ENCODE measurements at regions of chr7 and their contacts with region 1.

Region 1: DNA sequence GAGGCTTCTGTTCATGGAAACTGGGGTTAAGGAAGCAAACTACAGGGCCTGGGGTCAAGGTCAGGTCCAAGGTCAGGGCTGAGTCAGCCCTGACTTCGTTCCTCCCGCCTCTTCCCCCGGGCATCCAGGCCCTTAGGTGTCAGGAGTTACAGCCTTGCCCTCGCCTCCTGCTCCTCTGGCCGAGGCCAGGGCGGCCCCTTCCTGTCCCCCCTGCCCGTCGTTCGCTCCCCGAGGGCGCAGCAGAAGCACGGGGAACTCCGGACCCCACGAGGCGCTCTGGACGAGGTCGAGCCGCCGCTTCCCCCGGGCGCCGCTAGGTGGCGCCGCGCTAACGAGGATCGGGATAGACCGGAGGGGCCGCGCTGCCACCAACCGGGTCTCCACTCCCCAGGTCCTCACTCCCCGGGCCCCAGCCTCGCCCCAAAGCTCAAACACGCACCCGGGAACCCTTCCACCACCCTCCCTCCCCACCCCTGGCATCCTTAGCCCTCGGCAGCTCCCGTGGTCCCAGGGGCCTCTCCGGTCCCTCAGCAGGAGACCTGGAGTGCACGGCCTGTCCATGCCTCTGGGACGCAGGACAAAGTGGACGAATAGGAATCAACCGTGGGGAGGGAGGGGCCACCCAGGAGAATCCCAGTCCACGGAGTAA is 59.2 kb upstream of the MYL10 start:
- DNase-seq: peak; percentile 83
- ATAC-seq: peak; percentile 91
- H3K4me3 Mint-ChIP-seq: no peak overlapping the region
- H3K27ac Mint-ChIP-seq: no peak overlapping the region
- H3K4me1 Mint-ChIP-seq: peaks cover 5% of the 10 kb centered on the region
- H3K27me3 Mint-ChIP-seq: peaks cover 4% of the 10 kb centered on the region
- CTCF ChIP-seq: peak; percentile 38

Region 2: GRCh38 chr7:101542527-101543241 is 145.6 kb before region 1 on chr7:
- CTCF ChIA-PET with region 1: no interaction called
- POLR2A ChIA-PET with region 1: no interaction called
- intact Hi-C with region 1: loop called (anchors 2 kb)
- DNase-seq: peak; percentile 71
- ATAC-seq: peak; percentile 68
- H3K4me3 Mint-ChIP-seq: no peak overlapping the region
- H3K27ac Mint-ChIP-seq: no peak overlapping the region
- H3K4me1 Mint-ChIP-seq: no peaks in the 10 kb centered on the region
- H3K27me3 Mint-ChIP-seq: peaks cover 2% of the 10 kb centered on the region
- CTCF ChIP-seq: peak; percentile 26

Region 3: DNA sequence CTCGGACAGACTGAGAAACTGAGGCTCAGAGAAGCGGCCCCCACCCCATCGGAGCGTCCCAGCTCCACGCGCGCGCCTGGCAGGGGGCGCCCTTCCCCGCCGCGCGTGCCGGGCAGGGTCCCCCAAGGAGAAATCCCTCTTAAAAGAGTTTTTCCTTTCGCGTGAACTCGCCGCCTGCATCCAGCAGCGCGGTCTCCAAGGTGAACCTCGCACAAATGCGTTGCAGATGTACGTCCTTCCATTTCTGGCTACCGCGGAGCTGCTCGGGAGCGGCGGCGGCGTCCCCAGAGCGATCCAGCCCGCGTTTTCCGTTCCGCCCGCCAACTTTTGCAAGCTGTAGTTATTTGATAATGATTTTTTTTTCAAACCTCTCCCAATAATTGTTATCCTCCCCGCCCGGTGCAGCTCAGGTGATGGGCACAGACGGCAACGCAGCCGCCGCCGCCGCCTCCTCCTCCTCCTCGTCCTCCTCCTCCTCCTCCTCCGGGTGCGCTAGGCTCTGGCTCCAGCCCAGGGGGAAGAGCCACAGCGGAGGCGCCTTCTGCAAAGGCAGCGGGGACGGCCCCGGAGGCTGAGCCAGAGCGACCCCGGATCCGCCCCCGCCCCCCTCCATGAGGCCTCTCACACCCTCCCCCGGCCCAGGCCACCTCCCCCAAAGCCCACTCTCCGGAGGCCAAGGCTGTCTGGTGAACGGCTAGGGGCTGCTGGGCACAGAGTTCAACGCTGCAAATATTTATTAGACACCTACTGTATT is 55.1 kb after region 1 on chr7:
- CTCF ChIA-PET with region 1: interaction called, 6 read pairs
- POLR2A ChIA-PET with region 1: interaction called, 3 read pairs
- intact Hi-C with region 1: loop called (anchors 5 kb)
- DNase-seq: peak; percentile 53
- ATAC-seq: peak; percentile 63
- H3K4me3 Mint-ChIP-seq: peak overlapping the region; percentile 82
- H3K27ac Mint-ChIP-seq: no peak overlapping the region
- H3K4me1 Mint-ChIP-seq: peaks cover 52% of the 10 kb centered on the region
- H3K27me3 Mint-ChIP-seq: no peaks in the 10 kb centered on the region
- CTCF ChIP-seq: no peak

Region 4: GRCh38 chr7:101792051-101792681 is 103.9 kb after region 1 on chr7:
- CTCF ChIA-PET with region 1: no interaction called
- POLR2A ChIA-PET with region 1: no interaction called
- intact Hi-C with region 1: no loop called
- DNase-seq: no peak
- ATAC-seq: no peak
- H3K4me3 Mint-ChIP-seq: no peak overlapping the region
- H3K27ac Mint-ChIP-seq: no peak overlapping the region
- H3K4me1 Mint-ChIP-seq: no peaks in the 10 kb centered on the region
- H3K27me3 Mint-ChIP-seq: peaks cover 3% of the 10 kb centered on the region
- CTCF ChIP-seq: no peak

Region 5: DNA sequence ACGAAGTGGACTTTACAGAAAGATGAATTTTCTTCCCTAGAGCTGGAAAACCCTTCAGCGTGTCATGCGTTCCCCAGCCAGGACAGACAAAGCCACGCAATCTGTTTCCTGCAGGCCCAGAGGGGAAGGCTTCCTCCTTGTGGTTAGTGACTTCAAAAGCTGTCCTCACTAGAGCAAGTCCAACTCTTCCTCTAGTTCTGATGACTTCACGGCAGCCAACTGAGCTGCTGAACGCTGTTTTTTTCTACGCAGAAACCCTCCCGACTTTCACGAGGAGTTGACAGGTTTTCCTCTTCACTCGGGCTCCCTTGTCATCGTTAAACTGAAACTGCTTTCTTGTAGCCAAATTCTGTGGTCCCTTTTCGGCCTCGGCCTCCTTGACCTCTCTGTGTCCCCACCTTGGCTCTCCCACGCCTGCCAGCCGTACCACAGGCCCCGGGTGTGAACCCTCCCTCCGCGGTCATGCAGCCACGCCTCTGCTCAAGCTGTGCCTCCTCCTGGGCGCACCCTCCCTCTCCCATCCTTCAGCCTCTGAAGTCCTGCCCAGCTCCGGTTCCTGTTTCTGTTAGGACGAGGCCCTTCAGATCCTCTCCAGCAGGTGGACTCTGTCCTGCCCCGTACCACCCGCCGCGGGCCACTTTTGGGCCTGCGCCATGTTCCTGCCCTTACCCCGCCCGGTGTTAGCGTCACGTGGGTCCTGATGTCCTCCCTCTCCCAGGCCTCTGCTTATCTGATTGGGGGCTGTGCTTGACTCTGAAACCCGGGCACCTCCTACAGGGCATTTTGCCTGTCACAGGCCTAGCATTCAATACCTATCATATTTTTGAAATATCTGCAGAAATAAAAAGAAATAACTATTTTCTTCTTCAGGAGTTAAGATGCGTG is 168.4 kb after region 1 on chr7:
- CTCF ChIA-PET with region 1: no interaction called
- POLR2A ChIA-PET with region 1: no interaction called
- intact Hi-C with region 1: loop called (anchors 1 kb)
- DNase-seq: peak; percentile 76
- ATAC-seq: peak; percentile 86
- H3K4me3 Mint-ChIP-seq: peak overlapping the region; percentile 92
- H3K27ac Mint-ChIP-seq: peak overlapping the region; percentile 98
- H3K4me1 Mint-ChIP-seq: peaks cover 74% of the 10 kb centered on the region
- H3K27me3 Mint-ChIP-seq: no peaks in the 10 kb centered on the region
- CTCF ChIP-seq: no peak

Region 6: DNA sequence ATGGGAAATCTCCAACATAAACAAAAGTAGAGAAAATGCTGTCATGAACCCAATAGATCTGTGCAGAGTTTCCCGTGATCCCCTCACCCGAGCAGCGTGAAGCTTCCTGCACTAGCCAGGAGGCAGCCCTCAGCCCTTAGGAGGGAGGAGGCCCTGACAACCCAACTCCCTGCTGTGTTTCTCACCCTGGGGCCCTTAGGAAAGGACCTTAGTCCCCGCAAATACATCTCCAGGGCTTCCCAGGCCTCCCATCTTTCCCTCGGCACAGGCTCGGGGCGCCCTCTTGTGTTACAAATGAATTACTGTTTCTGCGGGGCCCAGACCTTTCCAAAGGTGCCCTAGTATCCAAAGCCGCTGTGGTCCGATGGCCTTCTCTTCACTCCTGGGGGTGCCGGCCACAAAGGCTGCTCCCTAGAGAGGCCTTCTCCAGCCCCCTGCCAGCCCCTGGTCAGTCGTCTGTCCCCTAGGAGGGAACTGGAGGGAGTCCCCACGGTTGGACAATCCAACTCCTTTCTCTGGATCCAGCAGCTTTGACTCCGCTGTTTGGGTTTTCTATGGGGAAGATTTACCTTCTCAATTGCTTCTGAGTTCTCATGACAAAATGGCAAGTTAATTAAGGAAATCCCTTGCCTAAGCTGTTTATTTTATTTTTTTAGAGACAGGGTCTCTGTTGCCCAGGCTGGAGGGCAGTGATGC is 548.4 kb after region 1 on chr7:
- CTCF ChIA-PET with region 1: interaction called, 10 read pairs
- POLR2A ChIA-PET with region 1: no interaction called
- intact Hi-C with region 1: loop called (anchors 1 kb)
- DNase-seq: peak; percentile 39
- ATAC-seq: peak; percentile 70
- H3K4me3 Mint-ChIP-seq: no peak overlapping the region
- H3K27ac Mint-ChIP-seq: no peak overlapping the region
- H3K4me1 Mint-ChIP-seq: no peaks in the 10 kb centered on the region
- H3K27me3 Mint-ChIP-seq: no peaks in the 10 kb centered on the region
- CTCF ChIP-seq: peak; percentile 26

Region 7: DNA sequence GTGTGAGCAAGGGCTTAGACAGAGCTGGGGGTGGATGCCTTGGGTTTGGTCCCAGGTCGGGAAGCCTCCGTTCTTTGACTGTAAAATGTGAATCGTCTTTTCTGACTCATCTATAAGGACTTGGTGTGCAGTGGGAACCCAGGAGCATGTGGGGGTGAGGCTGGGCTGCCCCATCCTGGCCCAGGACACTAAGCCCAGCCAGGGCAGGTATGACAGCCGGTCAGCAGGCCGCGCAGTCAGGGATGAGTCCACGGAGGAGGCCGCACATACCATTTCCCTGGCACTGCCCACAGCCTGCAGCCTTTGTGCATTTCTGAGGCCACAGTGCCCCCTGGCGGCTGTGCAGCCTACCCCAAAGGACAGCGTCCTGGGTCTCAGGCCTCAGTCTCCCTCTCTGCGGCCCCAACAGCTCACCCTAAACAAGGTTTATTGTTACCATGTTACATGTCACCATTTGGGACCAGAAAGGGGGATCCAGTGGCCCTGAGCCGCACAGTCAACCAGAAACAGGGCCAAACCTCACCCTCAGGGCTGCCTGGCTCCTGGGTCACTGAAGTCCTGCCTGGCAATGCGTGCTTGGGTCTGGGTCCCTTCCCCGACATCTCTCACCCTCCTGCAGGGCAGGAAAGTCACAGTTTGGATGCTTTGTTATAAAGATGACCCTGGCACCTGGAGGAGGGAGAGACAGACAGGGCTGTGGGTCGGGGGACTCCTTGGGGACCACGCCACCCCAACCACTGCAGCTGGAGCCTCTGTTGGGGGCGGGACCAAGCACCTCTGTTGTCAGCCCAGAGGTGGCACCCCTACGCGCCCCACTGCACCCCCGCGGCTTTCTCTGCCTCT is 584.0 kb after region 1 on chr7:
- CTCF ChIA-PET with region 1: no interaction called
- POLR2A ChIA-PET with region 1: no interaction called
- intact Hi-C with region 1: loop called (anchors 1 kb)
- DNase-seq: peak; percentile 80
- ATAC-seq: peak; percentile 92
- H3K4me3 Mint-ChIP-seq: no peak overlapping the region
- H3K27ac Mint-ChIP-seq: no peak overlapping the region
- H3K4me1 Mint-ChIP-seq: peaks cover 4% of the 10 kb centered on the region
- H3K27me3 Mint-ChIP-seq: no peaks in the 10 kb centered on the region
- CTCF ChIP-seq: peak; percentile 28